ENCODE measurements at regions of chr4 and their contacts with region 1.

Region 1: GRCh38 chr4:183080372-183081115 is 18.5 kb upstream of the WWC2 start:
- DNase-seq: no peak
- H3K4me3 ChIP-seq: no peak overlapping the region
- H3K27ac ChIP-seq: no peak overlapping the region
- H3K4me1 ChIP-seq: peaks cover 2% of the 10 kb centered on the region
- H3K27me3 ChIP-seq: no peaks in the 10 kb centered on the region
- CTCF ChIP-seq: no peak
- POLR2A ChIP-seq: no peak

Region 2: GRCh38 chr4:183256756-183257385 is 176.3 kb after region 1 on chr4:
- CTCF ChIA-PET with region 1: interaction called, 228 read pairs
- POLR2A ChIA-PET with region 1: interaction called, 3 read pairs
- dilution Hi-C with region 1: no loop called
- intact Hi-C with region 1: no loop called
- DNase-seq: peak; percentile 45
- H3K4me3 ChIP-seq: no peak overlapping the region
- H3K27ac ChIP-seq: no peak overlapping the region
- H3K4me1 ChIP-seq: no peaks in the 10 kb centered on the region
- H3K27me3 ChIP-seq: no peaks in the 10 kb centered on the region
- CTCF ChIP-seq: peak; percentile 59 to 81
- POLR2A ChIP-seq: no peak

Region 3: GRCh38 chr4:183392377-183392776 is 311.8 kb after region 1 on chr4:
- CTCF ChIA-PET with region 1: no interaction called
- POLR2A ChIA-PET with region 1: no interaction called
- dilution Hi-C with region 1: no loop called
- intact Hi-C with region 1: no loop called
- DNase-seq: no peak
- H3K4me3 ChIP-seq: no peak overlapping the region
- H3K27ac ChIP-seq: no peak overlapping the region
- H3K4me1 ChIP-seq: no peaks in the 10 kb centered on the region
- H3K27me3 ChIP-seq: peaks cover 6 to 7% of the 10 kb centered on the region in 2 experiments
- CTCF ChIP-seq: no peak
- POLR2A ChIP-seq: no peak

Measured in endothelial cell of umbilical vein (primary cell).